A673 (cell line): ENCODE measurements at regions of chr6 and their contacts with region 1.

Region 1: DNA sequence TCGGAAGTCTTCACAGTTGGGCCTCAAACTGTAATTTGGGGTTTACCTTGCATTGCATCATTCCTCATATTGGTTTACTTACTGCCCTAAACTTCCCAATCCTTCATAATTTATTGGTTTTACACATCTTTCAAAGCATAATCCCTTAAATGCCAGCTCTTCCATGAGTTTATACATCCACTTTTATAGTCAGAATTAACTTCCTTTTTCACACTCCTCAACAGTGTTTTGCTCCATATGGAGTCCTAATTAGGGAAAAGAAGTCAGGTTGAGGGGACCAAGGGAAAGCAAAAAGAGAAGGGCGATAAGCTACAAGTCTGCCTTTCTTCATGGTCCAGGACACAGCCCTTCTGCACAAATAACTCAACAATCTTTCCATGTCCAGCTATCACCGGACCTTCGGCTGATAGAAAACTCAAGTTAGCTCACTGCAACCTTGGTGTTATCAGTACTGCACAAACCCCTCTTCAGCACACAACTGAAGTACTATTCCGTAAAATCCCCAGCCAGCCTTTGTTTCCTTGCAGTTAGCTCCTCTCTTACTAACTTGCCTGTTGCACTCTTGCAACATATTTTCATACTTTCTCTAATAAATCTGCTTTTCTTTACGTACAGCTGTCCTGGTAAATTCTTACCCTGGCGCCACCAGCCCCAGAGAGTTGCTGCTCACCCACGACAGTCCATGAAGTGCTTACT is 2.0 kb downstream of the EEF1E1 start:
- DNase-seq: peak; percentile 56
- H3K4me3 ChIP-seq: peak overlapping the region; percentile 10
- H3K27ac ChIP-seq: peak overlapping the region; percentile 86
- H3K4me1 ChIP-seq: peaks cover 8% of the 10 kb centered on the region
- H3K27me3 ChIP-seq: no peaks in the 10 kb centered on the region
- CTCF ChIP-seq: no peak

Region 2: DNA sequence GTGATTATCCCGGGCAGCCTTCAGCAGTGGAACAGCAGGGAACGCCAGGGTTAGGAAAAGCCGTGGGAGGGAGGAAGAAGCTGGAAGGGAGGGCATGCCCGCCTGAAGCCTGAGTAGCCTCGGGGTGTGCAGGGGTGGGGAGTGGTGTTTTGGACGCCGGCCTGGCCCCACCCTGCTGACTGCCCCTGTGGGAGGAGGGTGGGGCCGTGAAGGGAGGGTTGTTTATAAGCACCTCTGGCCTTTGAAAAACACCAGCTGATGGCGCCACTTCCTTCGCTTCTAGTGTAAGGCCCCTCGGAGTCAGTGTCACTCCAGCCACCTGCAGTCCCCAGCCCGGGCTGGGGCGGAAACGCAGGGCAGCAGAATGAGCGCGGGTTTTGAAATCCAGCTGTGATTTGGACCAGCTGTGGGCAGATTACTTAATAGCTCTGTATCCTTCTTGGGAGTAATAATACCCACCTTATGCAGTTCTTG is 427.2 kb before region 1 on chr6:
- CTCF ChIA-PET with region 1: no interaction called
- POLR2A ChIA-PET with region 1: no interaction called
- intact Hi-C with region 1: no loop called
- DNase-seq: peak; percentile 17
- H3K4me3 ChIP-seq: no peak overlapping the region
- H3K27ac ChIP-seq: no peak overlapping the region
- H3K4me1 ChIP-seq: no peaks in the 10 kb centered on the region
- H3K27me3 ChIP-seq: no peaks in the 10 kb centered on the region
- CTCF ChIP-seq: 0 out of 2 replicates have a peak, but pooled peaks have one; percentile 22

Region 3: GRCh38 chr6:8074213-8074612 is 26.1 kb before region 1 on chr6:
- CTCF ChIA-PET with region 1: interaction called, 10 read pairs
- POLR2A ChIA-PET with region 1: no interaction called
- intact Hi-C with region 1: no loop called
- DNase-seq: no peak
- H3K4me3 ChIP-seq: no peak overlapping the region
- H3K27ac ChIP-seq: no peak overlapping the region
- H3K4me1 ChIP-seq: no peaks in the 10 kb centered on the region
- H3K27me3 ChIP-seq: no peaks in the 10 kb centered on the region
- CTCF ChIP-seq: no peak